ENCODE measurements at regions of chrX and their contacts with region 1.

Region 1: DNA sequence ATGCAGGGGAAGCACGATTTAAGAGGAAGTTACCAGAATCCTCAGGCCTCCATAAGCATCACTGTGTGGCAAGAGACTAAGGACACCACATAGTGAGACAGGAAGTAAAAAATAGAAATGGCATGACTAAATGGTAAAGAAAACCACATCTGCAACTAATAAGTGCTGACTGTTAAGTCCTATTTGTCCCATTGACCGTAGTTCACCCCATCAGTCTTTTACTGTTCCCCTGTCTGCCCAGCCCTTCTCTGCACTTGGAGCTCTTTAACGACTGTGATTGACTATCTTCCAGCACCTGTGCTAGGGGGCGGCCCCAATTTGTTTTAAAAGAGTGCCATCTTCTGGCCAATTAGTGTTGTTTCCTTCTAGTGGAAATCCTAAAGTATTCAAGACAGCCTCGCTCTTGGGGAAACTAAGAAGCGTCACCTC is 94.2 kb downstream of the MAOA start:
- DNase-seq: peak; percentile 46
- H3K4me3 Mint-ChIP-seq: no peak overlapping the region
- H3K27ac Mint-ChIP-seq: no peak overlapping the region
- H3K4me1 Mint-ChIP-seq: no peaks in the 10 kb centered on the region
- H3K27me3 Mint-ChIP-seq: no peaks in the 10 kb centered on the region

Region 2: DNA sequence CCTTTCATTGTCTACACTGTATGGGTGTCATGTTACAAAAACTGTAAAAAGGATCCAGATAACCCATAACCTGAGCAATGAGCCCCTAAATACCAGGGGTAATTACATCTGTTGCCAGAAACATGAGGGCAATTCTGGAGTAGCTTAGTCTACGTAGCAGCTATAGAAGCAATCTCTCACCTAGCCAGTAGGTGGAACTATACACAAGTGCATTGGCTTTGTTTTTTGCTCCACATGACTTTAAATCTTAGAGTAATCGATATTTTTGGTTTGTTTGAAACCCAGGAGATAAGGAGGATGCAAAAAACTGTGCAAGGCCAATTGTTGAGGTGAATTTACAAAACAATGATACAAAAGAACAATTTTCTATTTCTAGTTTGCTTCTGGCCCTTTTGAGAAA is 1968.8 kb before region 1 on chrX:
- CTCF ChIA-PET with region 1: interaction called, 3 read pairs
- intact Hi-C with region 1: loop called (anchors 5 kb)
- DNase-seq: no peak
- H3K4me3 Mint-ChIP-seq: no peak overlapping the region
- H3K27ac Mint-ChIP-seq: no peak overlapping the region
- H3K4me1 Mint-ChIP-seq: peaks cover 14% of the 10 kb centered on the region
- H3K27me3 Mint-ChIP-seq: no peaks in the 10 kb centered on the region

Region 3: DNA sequence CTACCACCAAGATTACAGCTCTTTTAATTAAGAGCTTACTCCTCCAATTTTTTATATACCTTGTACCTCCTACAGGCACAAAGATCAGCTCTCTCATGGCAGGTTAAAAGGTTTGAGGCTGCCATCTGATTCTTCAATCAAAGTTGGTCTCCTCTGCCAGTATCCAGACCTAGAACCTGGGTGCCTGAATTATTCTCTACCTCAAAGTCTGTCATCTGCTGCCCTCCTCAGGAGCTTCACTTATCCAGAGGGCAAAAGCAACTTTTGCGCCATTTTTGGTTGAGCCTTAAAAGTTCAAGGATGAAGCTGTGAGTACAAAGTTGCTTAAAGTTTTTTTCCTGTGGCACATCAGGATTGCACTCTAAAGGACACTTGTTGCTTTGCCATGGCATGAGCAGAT is 628.6 kb before region 1 on chrX:
- CTCF ChIA-PET with region 1: no interaction called
- intact Hi-C with region 1: no loop called
- DNase-seq: peak; percentile 5
- H3K4me3 Mint-ChIP-seq: no peak overlapping the region
- H3K27ac Mint-ChIP-seq: no peak overlapping the region
- H3K4me1 Mint-ChIP-seq: peaks cover 2% of the 10 kb centered on the region
- H3K27me3 Mint-ChIP-seq: no peaks in the 10 kb centered on the region

Region 4: GRCh38 chrX:43735957-43736356 is 14.3 kb before region 1 on chrX:
- CTCF ChIA-PET with region 1: no interaction called
- intact Hi-C with region 1: no loop called
- DNase-seq: no peak
- H3K4me3 Mint-ChIP-seq: no peak overlapping the region
- H3K27ac Mint-ChIP-seq: no peak overlapping the region
- H3K4me1 Mint-ChIP-seq: no peaks in the 10 kb centered on the region
- H3K27me3 Mint-ChIP-seq: no peaks in the 10 kb centered on the region

Measured in activated naive CD4-positive, alpha-beta T cell treated with anti-CD3 and anti-CD28 coated beads for 36 hours (primary cell).